MCF 10A (cell line): ENCODE measurements at regions of chr12 and their contacts with region 1.

Region 1: DNA sequence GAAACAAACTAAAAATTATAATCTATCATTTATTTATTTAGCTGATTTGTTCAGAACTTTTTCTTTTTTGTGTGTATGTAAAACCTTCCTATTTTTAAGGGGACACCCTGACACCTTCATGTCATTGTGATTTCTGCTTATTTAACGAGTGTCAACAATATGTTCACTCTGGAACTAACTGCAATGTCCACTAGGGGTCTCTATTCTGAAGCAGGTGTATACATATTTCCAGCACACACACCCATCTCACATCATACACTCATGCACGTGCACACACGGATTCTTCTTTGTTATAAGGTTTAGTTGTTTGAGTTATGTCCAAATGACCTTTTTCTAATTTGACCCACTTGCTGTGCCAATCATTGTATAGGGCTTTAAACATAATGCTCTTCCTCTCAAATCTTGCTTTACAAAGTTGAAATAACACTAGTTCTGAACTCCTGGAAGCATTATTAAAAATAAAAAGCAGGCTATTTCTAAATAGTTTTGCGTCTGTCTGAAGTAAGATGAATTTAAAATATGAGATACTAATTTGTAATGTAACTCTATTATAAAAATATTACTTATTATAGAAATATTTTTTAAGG is 15.5 kb downstream of the E2F7 start:
- DNase-seq: peak; percentile 78
- H3K4me3 Mint-ChIP-seq: no peak overlapping the region
- H3K27ac Mint-ChIP-seq: peak overlapping the region; percentile 53
- H3K4me1 Mint-ChIP-seq: no peaks in the 10 kb centered on the region
- H3K27me3 Mint-ChIP-seq: no peaks in the 10 kb centered on the region
- CTCF ChIP-seq: peak; percentile 68

Region 2: DNA sequence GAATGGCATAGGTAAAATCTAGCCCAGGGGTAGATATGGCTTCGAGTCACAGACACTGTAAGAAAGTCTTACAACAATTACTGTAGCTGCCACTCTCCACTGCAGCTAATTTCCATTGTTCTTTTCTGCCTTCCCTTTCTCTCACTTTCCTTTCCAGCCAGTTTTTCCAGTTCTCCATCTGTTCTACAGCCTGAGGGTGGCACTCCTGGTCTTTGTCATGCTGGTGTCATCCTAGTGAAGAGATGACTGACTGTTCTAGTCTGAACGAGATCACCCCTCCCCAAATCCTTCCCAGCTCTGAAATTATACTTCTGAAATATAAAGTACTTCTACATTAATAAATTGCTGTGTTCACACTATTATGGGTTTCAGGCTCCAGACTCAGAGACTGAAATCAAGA is 96.9 kb before region 1 on chr12:
- CTCF ChIA-PET with region 1: interaction called, 10 read pairs
- POLR2A ChIA-PET with region 1: no interaction called
- intact Hi-C with region 1: no loop called
- DNase-seq: peak; percentile 30
- H3K4me3 Mint-ChIP-seq: no peak overlapping the region
- H3K27ac Mint-ChIP-seq: no peak overlapping the region
- H3K4me1 Mint-ChIP-seq: no peaks in the 10 kb centered on the region
- H3K27me3 Mint-ChIP-seq: no peaks in the 10 kb centered on the region
- CTCF ChIP-seq: peak; percentile 16

Region 3: GRCh38 chr12:77031745-77032144 is 18.1 kb before region 1 on chr12:
- CTCF ChIA-PET with region 1: interaction called, 21 read pairs
- POLR2A ChIA-PET with region 1: interaction called, 3 read pairs
- intact Hi-C with region 1: no loop called
- DNase-seq: peak; percentile 58
- H3K4me3 Mint-ChIP-seq: no peak overlapping the region
- H3K27ac Mint-ChIP-seq: peak overlapping the region; percentile 63
- H3K4me1 Mint-ChIP-seq: peaks cover 13% of the 10 kb centered on the region
- H3K27me3 Mint-ChIP-seq: no peaks in the 10 kb centered on the region
- CTCF ChIP-seq: no peak

Region 4: DNA sequence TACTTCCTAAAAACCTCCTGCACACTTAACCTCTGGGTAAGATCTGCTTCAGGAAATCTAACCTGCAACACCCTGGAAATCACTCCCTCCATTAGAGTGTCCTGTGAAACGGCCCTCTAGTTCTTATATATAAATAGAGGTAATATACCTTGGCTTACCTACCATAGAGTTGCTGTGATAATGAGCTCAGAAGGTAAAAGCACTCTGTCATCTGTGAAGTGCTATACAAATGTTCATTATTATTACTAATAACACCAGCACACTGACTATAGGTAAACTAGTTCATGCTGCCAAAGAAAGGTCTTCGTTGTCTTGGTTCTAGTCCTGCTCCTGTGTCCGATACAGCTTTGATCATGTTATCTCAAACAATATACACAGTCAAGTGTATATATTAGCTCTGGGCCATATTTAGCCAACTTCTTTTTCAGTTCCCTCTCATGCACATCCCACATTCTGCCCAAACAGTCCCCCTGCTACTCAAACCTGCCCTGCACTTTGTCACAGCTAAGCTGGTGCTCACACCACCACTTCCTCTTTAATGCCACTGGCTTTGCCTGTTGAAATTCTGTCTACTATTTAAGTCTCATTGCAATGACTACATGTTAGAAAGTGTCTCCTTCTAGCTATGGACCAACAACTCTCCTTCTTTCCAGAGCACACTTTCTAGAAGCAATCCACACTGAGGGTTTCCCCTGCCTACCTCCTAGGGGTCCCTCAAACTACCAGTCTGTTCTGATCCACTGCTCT is 10.4 kb after region 1 on chr12:
- CTCF ChIA-PET with region 1: interaction called, 55 read pairs
- POLR2A ChIA-PET with region 1: interaction called, 13 read pairs
- intact Hi-C with region 1: no loop called
- DNase-seq: no peak
- H3K4me3 Mint-ChIP-seq: no peak overlapping the region
- H3K27ac Mint-ChIP-seq: peak overlapping the region; percentile 61
- H3K4me1 Mint-ChIP-seq: peaks cover 57% of the 10 kb centered on the region
- H3K27me3 Mint-ChIP-seq: no peaks in the 10 kb centered on the region
- CTCF ChIP-seq: no peak

Region 5: GRCh38 chr12:77065361-77066204 is 15.7 kb after region 1 on chr12 and contains the start of gene E2F7:
- CTCF ChIA-PET with region 1: interaction called, 55 read pairs
- POLR2A ChIA-PET with region 1: interaction called, 9 read pairs
- intact Hi-C with region 1: no loop called
- DNase-seq: peak; percentile 94
- H3K4me3 Mint-ChIP-seq: peak within 1 kb of the TSS; percentile 69
- H3K27ac Mint-ChIP-seq: peak within 1 kb of the TSS; percentile 77
- H3K4me1 Mint-ChIP-seq: peaks cover 37% of the 10 kb centered on the region
- H3K27me3 Mint-ChIP-seq: no peaks in the 10 kb centered on the region
- CTCF ChIP-seq: no peak
- total RNA-seq, gene E2F7: 23.5 and 34.4 TPM in 2 replicates

Region 6: GRCh38 chr12:77152623-77153193 is 102.8 kb after region 1 on chr12:
- CTCF ChIA-PET with region 1: interaction called, 12 read pairs
- POLR2A ChIA-PET with region 1: no interaction called
- intact Hi-C with region 1: loop called (anchors 1 kb)
- DNase-seq: peak; percentile 48
- H3K4me3 Mint-ChIP-seq: no peak overlapping the region
- H3K27ac Mint-ChIP-seq: no peak overlapping the region
- H3K4me1 Mint-ChIP-seq: no peaks in the 10 kb centered on the region
- H3K27me3 Mint-ChIP-seq: no peaks in the 10 kb centered on the region
- CTCF ChIP-seq: peak; percentile 69

Region 7: GRCh38 chr12:77324763-77325468 is 275.1 kb after region 1 on chr12:
- CTCF ChIA-PET with region 1: interaction called, 4 read pairs
- POLR2A ChIA-PET with region 1: interaction called, 3 read pairs
- intact Hi-C with region 1: loop called (anchors 1 kb)
- DNase-seq: peak; percentile 75
- H3K4me3 Mint-ChIP-seq: peak overlapping the region; percentile 91
- H3K27ac Mint-ChIP-seq: peak overlapping the region; percentile 53
- H3K4me1 Mint-ChIP-seq: peaks cover 14% of the 10 kb centered on the region
- H3K27me3 Mint-ChIP-seq: peaks cover 13% of the 10 kb centered on the region
- CTCF ChIP-seq: peak; percentile 31